Caco-2 (cell line): ENCODE measurements at regions of chr1 and their contacts with region 1.

Region 1: DNA sequence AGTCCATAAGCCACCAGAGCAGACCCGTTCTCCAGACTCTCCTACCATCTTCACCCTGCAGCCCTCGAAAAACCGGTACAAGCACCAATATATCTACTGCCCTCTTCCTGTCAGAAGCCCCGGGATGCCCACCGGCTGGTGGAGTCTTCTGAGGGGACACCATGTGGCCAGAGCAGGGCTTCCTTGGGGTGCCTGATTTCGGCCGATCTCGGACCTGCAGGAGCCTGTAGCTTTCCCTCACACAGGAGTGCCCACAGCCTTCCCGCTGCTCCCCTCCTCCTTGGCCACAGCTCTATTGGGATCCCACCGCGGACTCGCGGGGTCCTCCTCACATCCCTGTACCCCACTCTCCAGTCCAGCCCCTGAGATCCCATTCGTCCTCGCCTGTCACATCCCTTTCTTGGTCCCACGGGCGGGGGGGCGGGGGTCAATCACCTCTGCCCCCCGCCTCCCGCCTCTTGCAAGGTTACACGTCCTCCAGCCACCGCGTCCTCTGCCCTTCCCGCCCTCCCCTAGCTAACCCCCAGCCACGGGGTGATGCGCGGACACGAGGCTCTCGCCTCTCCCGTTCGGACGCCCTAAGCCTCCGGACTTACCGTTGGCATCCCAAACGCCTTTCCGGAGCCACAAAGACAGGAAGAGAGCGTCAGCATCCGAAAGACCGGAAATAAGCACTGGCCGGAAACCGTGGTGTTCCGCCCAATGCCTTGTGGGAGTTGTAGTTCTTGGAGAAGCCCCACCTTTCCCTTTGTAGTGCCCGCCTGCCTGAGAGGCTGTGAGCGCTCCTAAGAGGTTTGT is at the start of gene SSR2:
- DNase-seq: peak; percentile 88 to 90
- H3K4me3 ChIP-seq: peak within 1 kb of the TSS; percentile 95
- H3K4me3 Mint-ChIP-seq: peak within 1 kb of the TSS; percentile 97
- H3K27ac Mint-ChIP-seq: peak within 1 kb of the TSS; percentile 77
- H3K4me1 ChIP-seq: peaks cover 12% of the 10 kb centered on the region; the same call in 1 of the 2 replicates
- H3K4me1 Mint-ChIP-seq: peaks cover 14% of the 10 kb centered on the region
- H3K27me3 ChIP-seq: no peaks in the 10 kb centered on the region
- H3K27me3 Mint-ChIP-seq: no peaks in the 10 kb centered on the region
- CTCF ChIP-seq: no peak
- total RNA-seq, gene SSR2: 198 and 203 TPM in 2 replicates

Region 2: GRCh38 chr1:155978325-155978972 is 42.0 kb before region 1 on chr1 and contains the start of gene ARHGEF2:
- CTCF ChIA-PET with region 1: no interaction called
- POLR2A ChIA-PET with region 1: no interaction called
- intact Hi-C with region 1: loop called (anchors 1 kb)
- DNase-seq: peak; percentile 75 to 79
- H3K4me3 ChIP-seq: peak within 1 kb of the TSS; percentile 99
- H3K4me3 Mint-ChIP-seq: peak within 1 kb of the TSS; percentile 82
- H3K27ac Mint-ChIP-seq: peak within 1 kb of the TSS; percentile 50
- H3K4me1 ChIP-seq: peaks cover 41% of the 10 kb centered on the region
- H3K4me1 Mint-ChIP-seq: peaks cover 39% of the 10 kb centered on the region
- H3K27me3 ChIP-seq: no peaks in the 10 kb centered on the region
- H3K27me3 Mint-ChIP-seq: no peaks in the 10 kb centered on the region
- CTCF ChIP-seq: peak in 1 of 2 experiments; percentile 55
- total RNA-seq, gene ARHGEF2: 46.9 and 60.3 TPM in 2 replicates

Region 3: DNA sequence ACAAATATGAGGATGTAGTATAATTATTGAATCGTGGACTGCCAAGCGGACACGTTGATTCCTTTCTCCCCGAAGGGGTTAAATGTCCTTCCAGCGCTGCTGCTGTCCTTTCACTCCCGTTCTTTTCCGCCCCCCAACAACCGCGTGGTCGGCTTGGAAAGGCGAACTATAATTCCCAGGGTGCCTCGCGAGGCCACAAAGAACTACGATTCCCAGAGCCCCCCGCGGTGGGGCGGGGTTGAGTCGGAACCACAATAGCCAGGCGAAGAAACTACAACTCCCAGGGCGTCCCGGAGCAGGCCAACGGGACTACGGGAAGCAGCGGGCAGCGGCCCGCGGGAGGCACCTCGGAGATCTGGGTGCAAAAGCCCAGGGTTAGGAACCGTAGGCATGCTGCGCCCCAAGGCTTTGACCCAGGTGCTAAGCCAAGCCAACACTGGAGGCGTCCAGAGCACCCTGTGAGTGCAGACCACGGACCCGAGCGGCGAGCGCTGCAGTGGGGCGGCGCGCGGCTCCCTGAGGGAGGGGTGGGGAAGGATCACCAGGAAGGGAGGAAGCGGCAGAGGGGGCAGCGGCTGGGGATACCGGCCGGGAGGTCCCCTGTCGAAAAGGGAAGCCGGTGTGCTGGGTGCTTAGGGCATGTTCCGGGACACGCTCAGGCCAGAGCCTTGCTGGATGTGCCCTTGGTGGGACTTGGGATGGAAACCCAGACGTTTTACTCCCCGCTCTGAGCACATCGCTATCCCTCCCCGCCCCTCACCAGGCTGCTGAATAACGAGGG is 34.2 kb after region 1 on chr1 and contains the start of gene LAMTOR2:
- CTCF ChIA-PET with region 1: interaction called, 4 read pairs
- POLR2A ChIA-PET with region 1: interaction called, 4 read pairs
- intact Hi-C with region 1: loop called (anchors 1 kb)
- DNase-seq: peak; percentile 98
- H3K4me3 ChIP-seq: peak within 1 kb of the TSS; percentile 86
- H3K4me3 Mint-ChIP-seq: peak within 1 kb of the TSS; percentile 98
- H3K27ac Mint-ChIP-seq: peak within 1 kb of the TSS; percentile 91
- H3K4me1 ChIP-seq: peaks cover 14% of the 10 kb centered on the region
- H3K4me1 Mint-ChIP-seq: no peaks in the 10 kb centered on the region
- H3K27me3 ChIP-seq: no peaks in the 10 kb centered on the region
- H3K27me3 Mint-ChIP-seq: no peaks in the 10 kb centered on the region
- CTCF ChIP-seq: peak in 1 of 2 experiments; percentile 5
- total RNA-seq, gene LAMTOR2: 49.4 and 49.5 TPM in 2 replicates

Region 4: DNA sequence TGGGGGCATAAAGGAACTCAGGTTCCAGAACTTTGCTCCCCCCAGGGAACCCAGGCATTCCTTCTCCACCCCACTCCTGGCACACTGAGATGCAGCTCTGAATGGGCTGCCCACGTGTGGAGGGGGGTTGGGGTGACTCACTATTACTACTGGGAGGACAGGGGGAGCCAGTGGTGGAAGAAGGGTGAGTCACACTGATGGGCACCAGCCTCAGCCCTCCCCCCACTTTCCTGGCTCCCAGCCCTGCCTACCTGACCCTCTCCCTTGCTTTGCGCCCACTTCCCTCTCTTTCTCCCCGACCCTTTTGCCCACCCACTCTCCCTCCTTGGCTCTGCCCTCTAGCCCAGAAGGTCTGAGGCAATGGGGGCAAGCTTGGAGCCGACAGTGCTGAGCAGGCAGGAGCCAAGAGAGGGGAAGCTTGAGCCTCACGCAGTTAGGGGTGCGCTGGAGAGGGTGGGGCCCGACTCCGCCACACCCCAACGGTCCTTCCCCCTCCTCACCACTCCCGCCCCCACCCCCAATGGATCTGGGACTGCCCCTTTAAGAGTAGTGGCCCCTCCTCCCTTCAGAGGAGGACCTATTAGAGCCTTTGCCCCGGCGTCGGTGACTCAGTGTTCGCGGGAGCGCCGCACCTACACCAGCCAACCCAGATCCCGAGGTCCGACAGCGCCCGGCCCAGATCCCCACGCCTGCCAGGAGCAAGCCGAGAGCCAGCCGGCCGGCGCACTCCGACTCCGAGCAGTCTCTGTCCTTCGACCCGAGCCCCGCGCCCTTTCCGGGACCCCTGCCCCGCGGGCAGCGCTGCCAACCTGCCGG is 93.8 kb after region 1 on chr1 and contains the start of gene LMNA:
- CTCF ChIA-PET with region 1: no interaction called
- POLR2A ChIA-PET with region 1: no interaction called
- intact Hi-C with region 1: no loop called
- DNase-seq: peak; percentile 83
- H3K4me3 ChIP-seq: peak within 1 kb of the TSS; percentile 98
- H3K4me3 Mint-ChIP-seq: peak within 1 kb of the TSS; percentile 95
- H3K27ac Mint-ChIP-seq: peak within 1 kb of the TSS; percentile 63
- H3K4me1 ChIP-seq: peaks cover 35% of the 10 kb centered on the region
- H3K4me1 Mint-ChIP-seq: peaks cover 26% of the 10 kb centered on the region
- H3K27me3 ChIP-seq: no peaks in the 10 kb centered on the region
- H3K27me3 Mint-ChIP-seq: no peaks in the 10 kb centered on the region
- CTCF ChIP-seq: no peak
- total RNA-seq, gene LMNA: 112 and 113 TPM in 2 replicates